Activated CD4-positive, alpha-beta memory T cell treated with anti-CD3 and anti-CD28 coated beads for 36 hours (primary cell): ENCODE measurements at regions of chr20 and their contacts with region 1.

Region 1: DNA sequence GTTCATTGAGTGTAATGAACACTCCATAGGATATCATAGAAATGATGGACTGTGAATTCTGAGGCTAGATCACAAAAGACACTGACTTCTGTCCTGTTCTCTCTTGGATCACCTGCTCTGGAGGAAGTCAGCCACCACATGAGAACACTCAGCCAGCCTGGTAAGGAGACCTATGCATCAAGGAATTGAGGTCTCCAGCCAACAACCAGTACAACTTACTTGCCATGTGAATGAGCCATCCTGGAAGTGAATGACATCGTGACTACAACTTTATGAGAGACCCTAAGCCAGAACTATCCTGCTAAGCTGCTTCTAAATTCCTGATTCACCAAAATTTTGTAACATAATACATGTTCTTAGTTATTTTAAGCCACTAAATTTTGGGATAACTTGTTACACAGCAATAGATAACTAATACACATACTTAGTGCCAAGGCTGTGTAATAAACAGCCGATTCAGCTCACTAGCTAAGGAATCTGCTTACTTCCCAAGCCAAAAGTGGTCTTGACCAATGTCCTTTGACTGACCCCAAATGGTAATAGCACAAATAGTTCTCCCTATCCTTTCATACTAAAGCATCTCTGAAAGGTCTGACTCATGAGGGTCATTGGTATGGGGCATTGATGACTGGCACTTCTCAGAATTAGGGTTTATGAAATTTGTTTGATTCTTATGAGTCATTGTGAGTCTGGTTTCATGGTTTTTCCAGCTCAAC is 6.9 kb upstream of the CTNNBL1 start:
- DNase-seq: no peak
- H3K4me3 Mint-ChIP-seq: no peak overlapping the region
- H3K27ac Mint-ChIP-seq: no peak overlapping the region
- H3K4me1 Mint-ChIP-seq: peaks cover 22% of the 10 kb centered on the region
- H3K27me3 Mint-ChIP-seq: peaks cover 29% of the 10 kb centered on the region

Region 2: GRCh38 chr20:37643400-37643799 is 43.5 kb before region 1 on chr20:
- CTCF ChIA-PET with region 1: no interaction called
- POLR2A ChIA-PET with region 1: interaction called, 4 read pairs
- intact Hi-C with region 1: loop called (anchors 1 kb)
- DNase-seq: peak; percentile 29
- H3K4me3 Mint-ChIP-seq: no peak overlapping the region
- H3K27ac Mint-ChIP-seq: no peak overlapping the region
- H3K4me1 Mint-ChIP-seq: peaks cover 3% of the 10 kb centered on the region
- H3K27me3 Mint-ChIP-seq: peaks cover 46% of the 10 kb centered on the region

Region 3: DNA sequence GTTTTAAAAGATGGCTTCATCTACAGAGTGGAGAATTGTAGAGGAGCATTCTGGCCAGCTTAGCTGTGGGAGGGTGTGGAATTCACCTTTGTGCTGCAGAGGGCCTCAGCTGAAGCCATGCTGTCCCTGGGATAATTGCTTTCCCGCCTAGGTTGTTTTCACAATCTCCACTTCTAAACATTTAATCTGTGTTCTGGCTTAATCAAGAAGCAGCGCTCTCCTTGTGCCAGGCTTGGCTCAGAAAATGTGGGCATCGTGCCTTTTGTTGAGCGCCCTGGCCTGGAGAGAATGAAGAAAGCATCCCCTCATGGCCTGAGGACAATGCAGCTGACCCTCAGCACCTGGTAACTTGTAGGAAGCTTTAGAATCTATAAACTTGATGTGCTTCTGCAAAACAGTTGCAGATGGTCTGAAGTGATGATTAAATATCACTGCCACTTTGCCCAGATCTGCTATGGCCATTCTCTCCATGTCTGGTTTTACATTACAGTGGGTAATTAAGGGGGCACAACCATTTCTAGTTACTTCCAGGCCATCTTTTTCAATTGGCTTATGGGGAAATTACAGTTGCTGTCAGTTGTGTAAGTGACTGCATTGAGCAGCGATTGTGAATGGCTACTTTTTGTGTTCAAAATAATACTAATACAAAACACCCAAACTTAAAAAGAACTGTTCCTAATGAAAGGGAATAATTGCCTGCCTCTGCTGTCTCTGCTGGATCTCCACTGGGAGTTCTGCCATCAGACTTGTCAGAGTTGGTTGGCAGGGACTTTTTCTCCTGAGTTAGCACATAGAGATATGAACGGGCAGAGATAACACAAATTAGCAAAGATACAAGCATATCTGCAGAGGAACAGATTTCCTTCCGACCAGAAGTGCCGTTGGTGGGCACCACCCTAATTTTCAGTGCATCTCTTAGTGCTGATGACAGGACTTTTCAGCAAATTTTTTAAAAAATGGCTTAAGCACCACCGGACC is 25.4 kb after region 1 on chr20:
- CTCF ChIA-PET with region 1: no interaction called
- POLR2A ChIA-PET with region 1: no interaction called
- intact Hi-C with region 1: no loop called
- DNase-seq: no peak
- H3K4me3 Mint-ChIP-seq: no peak overlapping the region
- H3K27ac Mint-ChIP-seq: no peak overlapping the region
- H3K4me1 Mint-ChIP-seq: peaks cover 26% of the 10 kb centered on the region
- H3K27me3 Mint-ChIP-seq: no peaks in the 10 kb centered on the region